Ovary (tissue), 10 donors: ENCODE measurements at regions of chr7 and their contacts with region 1.

Region 1: GRCh38 chr7:131051304-131051703 is 276.4 kb upstream of the MKLN1 start:
- DNase-seq: no peak
- H3K4me3 ChIP-seq: no peak overlapping the region
- H3K27ac ChIP-seq: no peak overlapping the region
- H3K4me1 ChIP-seq: peaks cover 28% of the 10 kb centered on the region
- H3K27me3 ChIP-seq: no peaks in the 10 kb centered on the region
- CTCF ChIP-seq: no peak
- EP300 ChIP-seq: no peak
- POLR2A ChIP-seq: no peak

Region 2: GRCh38 chr7:130505753-130506152 is 545.6 kb before region 1 on chr7:
- intact Hi-C with region 1: no loop called
- DNase-seq: no peak
- H3K4me3 ChIP-seq: no peak overlapping the region
- H3K27ac ChIP-seq: no peak overlapping the region
- H3K4me1 ChIP-seq: no peaks in the 10 kb centered on the region
- H3K27me3 ChIP-seq: no peaks in the 10 kb centered on the region
- CTCF ChIP-seq: no peak
- EP300 ChIP-seq: no peak
- POLR2A ChIP-seq: no peak

Region 3: DNA sequence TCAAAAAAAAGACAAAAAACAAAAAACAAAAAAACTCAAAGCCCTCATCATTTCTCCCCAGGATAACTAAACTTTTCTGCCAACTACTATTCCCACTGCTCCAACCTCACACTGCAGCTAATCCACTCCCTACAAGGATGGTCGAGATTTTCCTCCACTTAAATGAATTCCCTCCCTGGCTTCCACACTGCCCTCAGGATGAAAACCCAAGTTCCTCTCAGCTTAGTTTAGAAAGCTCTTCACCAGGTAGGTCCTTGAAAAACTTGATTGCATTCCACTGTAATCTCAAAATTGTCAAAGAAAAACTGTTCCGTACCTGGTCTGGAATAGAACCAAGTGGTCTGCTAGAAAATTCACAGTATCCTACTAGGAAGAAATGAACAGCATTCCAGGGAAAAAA is 23.0 kb before region 1 on chr7:
- intact Hi-C with region 1: loop called in 1 of 4 experiments (anchors 2 kb)
- DNase-seq: no peak
- H3K4me3 ChIP-seq: no peak overlapping the region
- H3K27ac ChIP-seq: no peak overlapping the region
- H3K4me1 ChIP-seq: peaks cover 11% of the 10 kb centered on the region
- H3K27me3 ChIP-seq: no peaks in the 10 kb centered on the region
- CTCF ChIP-seq: no peak
- EP300 ChIP-seq: no peak
- POLR2A ChIP-seq: no peak